ENCODE measurements at regions of chr3 and their contacts with region 1.

Region 1: GRCh38 chr3:175349168-175349567 is 490.0 kb downstream of the NAALADL2 start:
- DNase-seq: no peak
- H3K4me3 ChIP-seq: no peak overlapping the region
- H3K27ac ChIP-seq: no peak overlapping the region
- H3K4me1 ChIP-seq: no peaks in the 10 kb centered on the region
- H3K27me3 ChIP-seq: no peaks in the 10 kb centered on the region
- CTCF ChIP-seq: no peak

Region 2: GRCh38 chr3:175641414-175641813 is 292.2 kb after region 1 on chr3:
- CTCF ChIA-PET with region 1: interaction called, 10 read pairs
- POLR2A ChIA-PET with region 1: no interaction called
- intact Hi-C with region 1: no loop called
- DNase-seq: no peak
- H3K4me3 ChIP-seq: no peak overlapping the region
- H3K27ac ChIP-seq: no peak overlapping the region
- H3K4me1 ChIP-seq: no peaks in the 10 kb centered on the region
- H3K27me3 ChIP-seq: no peaks in the 10 kb centered on the region
- CTCF ChIP-seq: no peak

Region 3: GRCh38 chr3:176514297-176514696 is 1165.1 kb after region 1 on chr3:
- CTCF ChIA-PET with region 1: no interaction called
- POLR2A ChIA-PET with region 1: interaction called, 16 read pairs
- intact Hi-C with region 1: no loop called
- DNase-seq: peak; percentile 25 to 43
- H3K4me3 ChIP-seq: no peak overlapping the region
- H3K27ac ChIP-seq: no peak overlapping the region
- H3K4me1 ChIP-seq: no peaks in the 10 kb centered on the region
- H3K27me3 ChIP-seq: no peaks in the 10 kb centered on the region
- CTCF ChIP-seq: peak; percentile 93